ENCODE measurements at regions of chr5 and their contacts with region 1.

Region 1: GRCh38 chr5:42908509-42909488 is 97.1 kb upstream of the SELENOP start:
- DNase-seq: peak; percentile 89 to 90
- H3K4me3 ChIP-seq: peak overlapping the region; percentile 38
- H3K4me3 Mint-ChIP-seq: peak overlapping the region; percentile 97
- H3K27ac Mint-ChIP-seq: peak overlapping the region; percentile 64
- H3K4me1 ChIP-seq: peaks cover 5% of the 10 kb centered on the region; the same call in 1 of the 2 replicates
- H3K4me1 Mint-ChIP-seq: no peaks in the 10 kb centered on the region
- H3K27me3 ChIP-seq: no peaks in the 10 kb centered on the region
- H3K27me3 Mint-ChIP-seq: peaks cover 5% of the 10 kb centered on the region
- CTCF ChIP-seq: peak; percentile 82 to 88

Region 2: DNA sequence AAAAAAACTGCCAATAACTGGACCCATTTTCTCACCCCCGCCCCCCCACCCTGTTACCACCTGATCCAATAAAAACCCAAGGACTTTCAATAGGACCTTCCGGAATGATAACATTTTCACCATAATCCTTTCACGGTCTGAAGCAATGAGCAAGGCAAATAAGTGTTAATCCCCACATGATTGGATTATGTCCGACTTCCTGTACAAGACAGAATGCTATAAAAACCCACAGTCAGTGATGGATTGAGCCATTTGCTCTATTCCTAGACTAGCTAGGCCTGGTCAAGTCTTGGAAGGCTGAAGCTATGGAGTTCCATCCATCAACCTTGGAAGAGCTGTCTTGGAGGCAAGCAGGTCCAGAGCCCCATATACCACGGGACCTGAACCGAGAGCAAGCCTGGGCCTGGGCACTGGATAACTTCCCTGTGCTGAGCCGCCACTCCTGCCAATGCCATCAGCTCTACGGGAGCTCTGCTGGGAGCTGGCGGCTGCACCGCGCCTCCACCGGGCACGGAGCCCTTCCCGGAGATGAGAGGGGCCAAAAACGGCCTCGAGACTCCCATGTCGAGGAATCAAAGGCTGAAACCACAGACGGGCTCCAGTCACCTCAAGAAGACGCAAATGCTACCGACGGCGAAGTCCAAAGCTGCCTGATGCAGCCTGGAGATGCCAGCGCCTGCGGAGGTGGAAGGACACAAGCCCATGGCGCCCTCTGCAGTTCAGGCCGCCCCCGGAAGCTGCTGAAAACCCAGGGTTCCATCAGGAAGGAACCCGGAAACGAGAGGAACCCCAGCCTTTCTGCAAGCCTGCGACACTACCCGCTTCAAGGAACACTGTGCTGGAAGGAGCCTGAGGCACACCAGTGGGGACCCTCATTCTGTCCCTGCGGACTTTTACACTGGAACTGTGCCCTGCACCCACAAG is 62.1 kb after region 1 on chr5:
- CTCF ChIA-PET with region 1: interaction called, 12 read pairs
- POLR2A ChIA-PET with region 1: no interaction called
- intact Hi-C with region 1: loop called (anchors 1 kb)
- DNase-seq: peak in 1 of 2 experiments; percentile 40
- H3K4me3 ChIP-seq: no peak overlapping the region
- H3K4me3 Mint-ChIP-seq: no peak overlapping the region
- H3K27ac Mint-ChIP-seq: no peak overlapping the region
- H3K4me1 ChIP-seq: no peaks in the 10 kb centered on the region
- H3K4me1 Mint-ChIP-seq: no peaks in the 10 kb centered on the region
- H3K27me3 ChIP-seq: no peaks in the 10 kb centered on the region
- H3K27me3 Mint-ChIP-seq: no peaks in the 10 kb centered on the region
- CTCF ChIP-seq: no peak

Region 3: DNA sequence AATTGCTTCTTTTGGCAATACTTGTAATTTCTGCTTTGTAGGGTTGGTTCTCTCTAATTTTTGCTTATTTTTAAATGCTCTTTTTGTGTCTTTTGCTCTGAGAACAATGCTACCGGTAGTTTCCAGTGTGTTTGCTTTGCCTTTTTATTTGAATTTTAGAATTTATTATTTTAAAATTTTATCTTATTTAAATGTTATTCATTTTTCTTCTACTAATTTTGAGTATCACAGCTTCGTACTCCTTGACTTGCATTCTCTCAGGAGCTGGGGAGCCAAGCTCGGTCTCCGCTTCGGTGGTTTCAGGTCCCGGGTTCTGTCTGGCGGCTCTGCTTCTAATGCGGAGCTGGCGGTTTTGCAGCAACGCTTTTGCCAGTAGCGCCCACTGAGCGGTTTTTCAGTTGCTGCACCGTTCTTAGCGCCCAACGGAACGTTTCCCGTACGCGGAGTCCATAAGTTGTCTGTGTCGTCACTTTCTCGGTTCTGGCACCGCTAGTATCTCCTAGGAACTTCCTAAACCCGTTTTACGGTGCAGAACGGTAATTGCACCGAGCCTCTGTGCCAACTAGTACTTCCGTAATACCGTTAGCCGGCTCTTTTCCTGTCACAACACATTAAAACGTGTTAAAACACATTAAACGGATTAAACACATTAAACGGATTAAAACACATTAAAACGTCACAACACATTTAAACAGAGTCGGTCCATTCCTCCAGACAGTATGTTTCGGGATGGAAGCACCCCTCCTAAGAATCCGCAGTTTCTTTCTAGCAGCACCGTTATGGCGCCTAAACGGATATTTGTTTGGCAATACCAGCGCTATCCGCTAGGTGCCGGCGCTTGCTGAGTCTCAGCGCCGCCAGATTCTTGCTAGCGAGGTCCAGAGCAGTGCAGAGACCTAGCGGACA is 85.7 kb after region 1 on chr5:
- CTCF ChIA-PET with region 1: interaction called, 5 read pairs
- POLR2A ChIA-PET with region 1: no interaction called
- intact Hi-C with region 1: loop called (anchors 5 kb)
- DNase-seq: peak in 1 of 2 experiments; percentile 67
- H3K4me3 ChIP-seq: no peak overlapping the region
- H3K4me3 Mint-ChIP-seq: peak overlapping the region; percentile 42
- H3K27ac Mint-ChIP-seq: no peak overlapping the region
- H3K4me1 ChIP-seq: no peaks in the 10 kb centered on the region
- H3K4me1 Mint-ChIP-seq: no peaks in the 10 kb centered on the region
- H3K27me3 ChIP-seq: no peaks in the 10 kb centered on the region
- H3K27me3 Mint-ChIP-seq: no peaks in the 10 kb centered on the region
- CTCF ChIP-seq: peak; percentile 46 to 50

Region 4: GRCh38 chr5:43008369-43009153 is 99.8 kb after region 1 on chr5:
- CTCF ChIA-PET with region 1: interaction called, 18 read pairs
- POLR2A ChIA-PET with region 1: interaction called, 4 read pairs
- intact Hi-C with region 1: loop called (anchors 1 kb)
- DNase-seq: peak; percentile 94 to 95
- H3K4me3 ChIP-seq: peak overlapping the region; percentile 68
- H3K4me3 Mint-ChIP-seq: peak overlapping the region; percentile 94
- H3K27ac Mint-ChIP-seq: peak overlapping the region; percentile 97
- H3K4me1 ChIP-seq: no peaks in the 10 kb centered on the region; the same call in 1 of the 2 replicates
- H3K4me1 Mint-ChIP-seq: peaks cover 14% of the 10 kb centered on the region
- H3K27me3 ChIP-seq: no peaks in the 10 kb centered on the region
- H3K27me3 Mint-ChIP-seq: peaks cover 3% of the 10 kb centered on the region
- CTCF ChIP-seq: peak in 1 of 2 experiments; percentile 42

Region 5: GRCh38 chr5:43040287-43041098 is 131.7 kb after region 1 on chr5 and contains the start of gene ANXA2R:
- CTCF ChIA-PET with region 1: interaction called, 28 read pairs
- POLR2A ChIA-PET with region 1: interaction called, 4 read pairs
- intact Hi-C with region 1: loop called (anchors 1 kb)
- DNase-seq: peak; percentile 92 to 93
- H3K4me3 ChIP-seq: peak within 1 kb of the TSS; percentile 80
- H3K4me3 Mint-ChIP-seq: peak within 1 kb of the TSS; percentile 86
- H3K27ac Mint-ChIP-seq: peak within 1 kb of the TSS; percentile 58
- H3K4me1 ChIP-seq: no peaks in the 10 kb centered on the region
- H3K4me1 Mint-ChIP-seq: no peaks in the 10 kb centered on the region
- H3K27me3 ChIP-seq: no peaks in the 10 kb centered on the region
- H3K27me3 Mint-ChIP-seq: no peaks in the 10 kb centered on the region
- CTCF ChIP-seq: peak; percentile 87 to 88
- total RNA-seq, gene ANXA2R: 3.1 and 4.1 TPM in 2 replicates

Region 6: DNA sequence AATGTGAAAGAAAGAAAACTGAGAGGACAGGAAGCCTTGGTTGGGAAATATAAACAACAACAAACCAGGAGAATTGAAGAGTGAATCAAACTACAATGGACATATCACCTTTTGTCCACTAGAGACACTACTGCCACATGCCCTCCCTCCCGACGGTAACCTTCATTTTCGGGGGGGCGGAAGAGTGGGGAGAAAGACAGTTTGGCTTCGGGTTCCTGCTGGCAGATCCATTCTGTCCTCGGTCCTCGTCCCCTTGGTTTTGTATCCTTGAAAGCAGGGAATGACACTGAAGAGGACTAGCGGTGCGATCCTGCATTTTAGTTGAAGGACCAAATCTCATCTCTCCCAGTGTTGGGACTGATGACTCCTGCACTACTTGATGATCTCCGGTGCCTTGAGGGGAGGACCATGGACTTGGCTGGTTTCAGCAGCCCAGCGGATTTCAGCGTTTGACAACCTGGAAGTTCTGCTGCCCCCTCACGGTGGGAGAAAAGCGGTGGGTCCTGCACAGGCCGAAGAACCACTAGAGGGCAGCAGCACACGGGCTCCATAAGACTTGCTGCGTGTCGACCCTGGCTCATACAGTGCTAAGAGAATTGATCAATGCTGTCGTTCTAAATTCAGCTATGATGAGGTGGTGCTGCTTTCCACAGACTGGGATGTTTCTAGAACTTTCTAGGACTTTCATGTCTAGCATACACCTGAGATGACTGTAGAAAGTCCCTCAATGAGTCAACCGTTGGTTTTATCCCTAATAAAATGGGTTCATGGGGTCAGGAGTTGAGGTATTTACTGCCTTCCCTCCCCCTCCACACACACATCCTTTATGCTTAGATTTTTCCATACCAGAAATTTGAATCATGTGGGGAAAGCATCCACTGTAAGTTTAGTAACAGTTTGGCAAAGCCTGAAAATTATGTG is 196.8 kb after region 1 on chr5:
- CTCF ChIA-PET with region 1: interaction called, 7 read pairs
- POLR2A ChIA-PET with region 1: no interaction called
- intact Hi-C with region 1: loop called (anchors 1 kb)
- DNase-seq: peak; percentile 93
- H3K4me3 ChIP-seq: peak overlapping the region; percentile 21
- H3K4me3 Mint-ChIP-seq: peak overlapping the region; percentile 68
- H3K27ac Mint-ChIP-seq: peak overlapping the region; percentile 49
- H3K4me1 ChIP-seq: peaks cover 8% of the 10 kb centered on the region; the same call in 1 of the 2 replicates
- H3K4me1 Mint-ChIP-seq: peaks cover 8% of the 10 kb centered on the region
- H3K27me3 ChIP-seq: no peaks in the 10 kb centered on the region
- H3K27me3 Mint-ChIP-seq: no peaks in the 10 kb centered on the region
- CTCF ChIP-seq: peak; percentile 99 to 100